Sciatic nerve (tissue), 2 donors: ENCODE measurements at regions of chr6 and their contacts with region 1.

Region 1: GRCh38 chr6:88920774-88921733 is 42.4 kb downstream of the RNGTT start:
- DNase-seq: no peak
- ATAC-seq: no peak

Region 2: GRCh38 chr6:88975369-88975768 is 54.3 kb after region 1 on chr6:
- intact Hi-C with region 1: loop called (anchors 2 kb)
- DNase-seq: no peak
- ATAC-seq: no peak

Region 3: DNA sequence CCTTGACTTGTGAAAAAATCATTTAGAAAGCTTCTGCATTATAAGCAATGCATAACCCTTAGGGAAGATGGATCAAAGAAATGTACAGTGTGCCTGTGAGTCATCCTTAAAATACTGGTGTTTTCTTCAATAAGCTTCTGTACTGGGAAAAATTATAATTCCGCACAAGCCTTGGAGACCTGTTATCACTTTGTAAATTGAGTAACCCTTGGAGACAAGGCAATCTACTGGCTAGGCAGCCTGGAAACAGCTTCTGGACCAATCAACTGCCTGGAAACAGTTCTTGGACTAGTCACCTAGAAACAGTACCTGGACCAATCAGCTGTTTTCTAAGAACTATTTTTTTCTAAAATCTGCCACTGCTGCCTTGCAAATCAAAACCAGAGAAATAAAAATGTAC is 68.2 kb after region 1 on chr6:
- intact Hi-C with region 1: no loop called
- DNase-seq: no peak
- ATAC-seq: no peak